CD4-positive, alpha-beta memory T cell (primary cell): ENCODE measurements at regions of chr13 and their contacts with region 1.

Region 1: DNA sequence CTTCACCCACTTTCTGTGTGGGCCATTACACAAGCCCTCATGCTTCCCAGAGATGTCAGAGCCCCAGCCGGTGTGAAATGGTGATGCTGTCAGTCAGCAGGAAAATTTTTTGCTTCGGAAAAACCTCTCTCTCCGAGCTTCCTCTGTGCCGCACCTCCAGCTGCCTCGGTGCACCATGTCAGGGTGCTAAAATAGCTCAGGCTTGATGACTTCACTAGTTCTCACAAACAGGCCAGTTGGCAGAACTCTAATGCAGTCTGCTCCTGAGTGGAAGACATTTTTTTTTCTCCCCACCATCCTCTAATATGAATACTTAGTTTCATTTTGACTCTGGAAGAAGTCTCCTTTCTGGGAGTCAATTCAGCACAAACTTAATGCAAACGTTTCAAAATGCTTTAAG is 71.3 kb downstream of the KLF12 start:
- DNase-seq: peak in 1 of 5 donors; percentile 70
- H3K4me3 ChIP-seq: peak overlapping the region in 1 of 2 donors; percentile 7
- H3K4me3 Mint-ChIP-seq: peak overlapping the region; percentile 57 to 93 (median 83)
- H3K27ac ChIP-seq: peak overlapping the region; percentile 48
- H3K27ac Mint-ChIP-seq: peak overlapping the region; percentile 81 to 98 (median 93)
- H3K4me1 ChIP-seq: peaks cover 93% of the 10 kb centered on the region
- H3K4me1 Mint-ChIP-seq: peaks cover 59 to 93% (median 86%) of the 10 kb centered on the region in 4 donors
- H3K27me3 ChIP-seq: no peaks in the 10 kb centered on the region
- H3K27me3 Mint-ChIP-seq: no peaks in the 10 kb centered on the region

Region 2: DNA sequence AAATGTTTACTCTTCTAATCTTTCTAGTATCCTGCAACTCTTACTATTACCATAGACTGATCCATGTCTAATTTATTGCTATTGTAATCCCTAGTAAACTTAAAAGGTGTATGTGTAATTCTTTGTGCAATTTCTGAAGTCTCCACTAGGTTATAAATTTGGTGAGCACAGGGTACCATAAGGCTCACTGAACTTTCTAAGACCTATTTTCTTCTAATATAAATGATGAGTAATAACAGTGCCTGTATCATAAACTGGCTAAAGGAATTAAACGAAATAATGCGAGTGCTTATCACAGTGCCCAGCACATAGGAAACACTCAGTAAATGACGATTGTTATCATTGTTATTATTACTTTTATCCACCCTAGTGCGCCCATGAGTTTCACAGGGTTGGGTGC is 47.8 kb before region 1 on chr13:
- CTCF ChIA-PET with region 1: no interaction called
- POLR2A ChIA-PET with region 1: no interaction called
- intact Hi-C with region 1: no loop called
- DNase-seq: no peak
- H3K4me3 ChIP-seq: no peak overlapping the region
- H3K4me3 Mint-ChIP-seq: no peak overlapping the region
- H3K27ac ChIP-seq: no peak overlapping the region
- H3K27ac Mint-ChIP-seq: no peak overlapping the region
- H3K4me1 ChIP-seq: peaks cover 37% of the 10 kb centered on the region
- H3K4me1 Mint-ChIP-seq: peaks cover 38 to 84% (median 61%) of the 10 kb centered on the region in 4 donors
- H3K27me3 ChIP-seq: no peaks in the 10 kb centered on the region
- H3K27me3 Mint-ChIP-seq: no peaks in the 10 kb centered on the region

Region 3: GRCh38 chr13:74026753-74027152 is 36.2 kb before region 1 on chr13:
- CTCF ChIA-PET with region 1: no interaction called
- POLR2A ChIA-PET with region 1: interaction called, 7 read pairs
- intact Hi-C with region 1: loop called (anchors 5 kb)
- DNase-seq: peak; percentile 63 to 88 (median 68)
- H3K4me3 ChIP-seq: peak overlapping the region in 1 of 2 donors; percentile 36
- H3K4me3 Mint-ChIP-seq: peak overlapping the region; percentile 79 to 93 (median 86)
- H3K27ac ChIP-seq: peak overlapping the region; percentile 54
- H3K27ac Mint-ChIP-seq: peak overlapping the region; percentile 87 to 97 (median 94)
- H3K4me1 ChIP-seq: peaks cover 83% of the 10 kb centered on the region
- H3K4me1 Mint-ChIP-seq: peaks cover 71 to 91% (median 81%) of the 10 kb centered on the region in 4 donors
- H3K27me3 ChIP-seq: no peaks in the 10 kb centered on the region
- H3K27me3 Mint-ChIP-seq: no peaks in the 10 kb centered on the region

Region 4: DNA sequence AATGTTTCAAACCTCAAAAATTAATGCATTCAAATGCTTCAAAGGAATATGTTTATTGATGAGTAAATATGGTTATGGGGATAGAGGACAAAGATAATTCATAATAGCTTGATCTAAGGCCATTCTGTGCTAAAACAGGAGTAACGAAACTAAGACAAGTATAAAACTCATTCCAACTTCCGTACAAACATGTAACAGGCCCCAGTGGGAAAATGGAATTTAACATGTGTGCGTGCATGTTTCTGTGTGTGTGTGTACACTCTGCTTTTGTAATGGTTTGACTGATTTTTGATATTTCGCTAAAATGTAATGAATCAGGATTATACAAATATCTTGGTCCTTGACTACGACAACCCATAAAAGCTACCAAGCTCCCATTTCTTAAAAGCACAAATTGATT is 19.7 kb before region 1 on chr13:
- CTCF ChIA-PET with region 1: no interaction called
- POLR2A ChIA-PET with region 1: interaction called, 16 read pairs
- intact Hi-C with region 1: no loop called
- DNase-seq: no peak
- H3K4me3 ChIP-seq: no peak overlapping the region
- H3K4me3 Mint-ChIP-seq: no peak overlapping the region
- H3K27ac ChIP-seq: no peak overlapping the region
- H3K27ac Mint-ChIP-seq: no peak overlapping the region
- H3K4me1 ChIP-seq: peaks cover 63% of the 10 kb centered on the region
- H3K4me1 Mint-ChIP-seq: peaks cover 48 to 80% (median 66%) of the 10 kb centered on the region in 4 donors
- H3K27me3 ChIP-seq: no peaks in the 10 kb centered on the region
- H3K27me3 Mint-ChIP-seq: no peaks in the 10 kb centered on the region

Region 5: DNA sequence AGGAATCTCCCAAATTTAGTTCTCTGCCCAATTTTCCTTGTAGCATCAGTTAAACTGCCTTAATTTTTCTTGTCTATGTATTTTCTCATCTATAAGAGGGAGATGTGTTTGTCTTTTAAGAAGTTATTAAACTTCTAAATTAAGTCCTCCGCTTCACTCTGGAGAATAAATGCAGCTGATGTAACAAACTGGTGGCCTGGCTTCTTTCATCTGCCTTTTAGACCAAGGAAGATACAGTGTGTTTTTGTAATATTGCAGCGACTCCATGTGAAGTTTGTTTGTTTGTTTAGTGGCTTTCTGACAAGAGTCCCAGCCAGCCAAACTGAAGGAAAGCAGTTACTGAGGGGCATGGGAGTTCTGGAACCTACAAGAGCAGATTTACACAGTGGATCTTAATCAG is 14.9 kb after region 1 on chr13:
- CTCF ChIA-PET with region 1: no interaction called
- POLR2A ChIA-PET with region 1: interaction called, 3 read pairs
- intact Hi-C with region 1: loop called (anchors 2 kb)
- DNase-seq: no peak
- H3K4me3 ChIP-seq: no peak overlapping the region
- H3K4me3 Mint-ChIP-seq: no peak overlapping the region
- H3K27ac ChIP-seq: no peak overlapping the region
- H3K27ac Mint-ChIP-seq: no peak overlapping the region
- H3K4me1 ChIP-seq: peaks cover 76% of the 10 kb centered on the region
- H3K4me1 Mint-ChIP-seq: peaks cover 60 to 88% (median 74%) of the 10 kb centered on the region in 4 donors
- H3K27me3 ChIP-seq: no peaks in the 10 kb centered on the region
- H3K27me3 Mint-ChIP-seq: no peaks in the 10 kb centered on the region

Region 6: GRCh38 chr13:74145249-74145975 is 82.5 kb after region 1 on chr13:
- CTCF ChIA-PET with region 1: no interaction called
- POLR2A ChIA-PET with region 1: no interaction called
- intact Hi-C with region 1: no loop called
- DNase-seq: no peak
- H3K4me3 ChIP-seq: no peak overlapping the region
- H3K4me3 Mint-ChIP-seq: no peak overlapping the region
- H3K27ac ChIP-seq: no peak overlapping the region
- H3K27ac Mint-ChIP-seq: no peak overlapping the region
- H3K4me1 ChIP-seq: no peaks in the 10 kb centered on the region
- H3K4me1 Mint-ChIP-seq: peaks cover 0 to 2% (median 0%) of the 10 kb centered on the region in 4 donors
- H3K27me3 ChIP-seq: no peaks in the 10 kb centered on the region
- H3K27me3 Mint-ChIP-seq: no peaks in the 10 kb centered on the region